ENCODE measurements at regions of chr12 and their contacts with region 1.

Region 1: DNA sequence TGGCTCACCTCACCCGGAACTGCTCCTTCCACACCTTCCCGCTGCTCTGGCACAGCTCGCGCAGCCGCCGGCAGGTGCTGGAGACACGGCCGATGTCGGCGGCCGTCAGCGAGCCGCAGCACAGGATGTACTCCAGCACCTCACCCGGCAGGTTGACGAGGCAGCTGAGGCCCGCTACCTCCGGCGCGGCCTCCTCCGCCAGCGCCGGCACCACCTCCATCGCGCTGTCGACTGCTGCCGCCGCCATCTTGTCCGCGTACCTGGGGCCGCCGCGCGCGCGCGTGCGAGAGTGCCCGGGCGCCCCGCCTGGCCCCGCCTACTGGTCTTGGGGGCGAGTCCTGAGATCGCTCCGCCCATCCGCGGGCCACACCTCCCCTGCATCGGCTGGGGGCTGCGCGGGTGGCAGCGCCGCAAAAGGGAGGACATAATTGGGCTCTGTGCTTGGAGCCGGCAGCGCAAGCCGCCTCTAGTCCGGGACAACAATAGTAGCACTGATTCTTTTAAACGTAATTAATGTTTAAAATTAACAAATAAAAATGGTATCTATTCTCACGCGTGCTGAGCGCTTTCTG is at the start of gene FBXO21:
- DNase-seq: peak; percentile 99
- H3K4me3 ChIP-seq: peak within 1 kb of the TSS; percentile 70 to 78
- H3K27ac ChIP-seq: peak within 1 kb of the TSS in 1 of 2 experiments; percentile 61; a peak in 1 of 4 replicates
- H3K4me1 ChIP-seq: peaks cover 4 to 10% of the 10 kb centered on the region in 2 experiments; a peak in 3 of 4 replicates
- H3K27me3 ChIP-seq: no peaks in the 10 kb centered on the region
- CTCF ChIP-seq: no peak
- EP300 ChIP-seq: no peak
- RAD21 ChIP-seq: no peak
- polyA plus RNA-seq, gene FBXO21: 44.2 and 51.1 TPM in 2 replicates

Region 2: GRCh38 chr12:117084405-117085317 is 105.6 kb before region 1 on chr12:
- CTCF ChIA-PET with region 1: no interaction called
- POLR2A ChIA-PET with region 1: no interaction called
- DNase-seq: no peak
- H3K4me3 ChIP-seq: no peak overlapping the region
- H3K27ac ChIP-seq: no peak overlapping the region
- H3K4me1 ChIP-seq: peaks cover 0 to 5% of the 10 kb centered on the region in 2 experiments; a peak in 1 of 4 replicates
- H3K27me3 ChIP-seq: no peaks in the 10 kb centered on the region; the same call in 1 of the 2 replicates
- CTCF ChIP-seq: no peak
- EP300 ChIP-seq: no peak
- RAD21 ChIP-seq: no peak

Region 3: GRCh38 chr12:117699575-117699974 is 509.3 kb after region 1 on chr12:
- CTCF ChIA-PET with region 1: no interaction called
- POLR2A ChIA-PET with region 1: no interaction called
- DNase-seq: no peak
- H3K4me3 ChIP-seq: no peak overlapping the region
- H3K27ac ChIP-seq: no peak overlapping the region
- H3K4me1 ChIP-seq: no peaks in the 10 kb centered on the region; a peak in 1 of 4 replicates
- H3K27me3 ChIP-seq: no peaks in the 10 kb centered on the region
- CTCF ChIP-seq: no peak
- EP300 ChIP-seq: no peak
- RAD21 ChIP-seq: no peak

Region 4: GRCh38 chr12:117760990-117761389 is 570.7 kb after region 1 on chr12:
- CTCF ChIA-PET with region 1: no interaction called
- POLR2A ChIA-PET with region 1: no interaction called
- DNase-seq: no peak
- H3K4me3 ChIP-seq: no peak overlapping the region
- H3K27ac ChIP-seq: no peak overlapping the region
- H3K4me1 ChIP-seq: no peaks in the 10 kb centered on the region
- H3K27me3 ChIP-seq: no peaks in the 10 kb centered on the region
- CTCF ChIP-seq: no peak
- EP300 ChIP-seq: no peak
- RAD21 ChIP-seq: no peak

Region 5: DNA sequence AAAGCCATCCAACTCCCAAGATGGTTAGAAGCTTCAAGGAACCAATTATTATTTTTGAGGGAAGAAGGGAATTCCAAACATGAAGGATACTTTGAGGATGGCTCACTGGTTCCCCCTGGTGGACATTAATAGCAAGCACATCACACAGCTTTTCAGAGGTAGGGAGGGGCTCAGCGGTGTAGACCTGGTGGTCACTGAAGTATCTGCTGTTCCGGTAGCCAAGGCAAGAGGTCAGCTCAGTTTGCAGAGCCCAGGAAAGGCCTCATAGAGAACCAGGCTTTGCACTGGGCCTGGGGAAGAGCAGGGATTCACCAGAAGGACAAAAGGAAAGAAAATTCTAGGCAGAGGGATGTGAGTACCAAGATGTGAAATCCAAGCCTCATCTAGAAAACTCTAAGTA is 659.8 kb after region 1 on chr12:
- CTCF ChIA-PET with region 1: interaction called, 10 read pairs
- POLR2A ChIA-PET with region 1: no interaction called
- DNase-seq: peak; percentile 81
- H3K4me3 ChIP-seq: no peak overlapping the region; a peak in 1 of 4 replicates
- H3K27ac ChIP-seq: no peak overlapping the region
- H3K4me1 ChIP-seq: no peaks in the 10 kb centered on the region
- H3K27me3 ChIP-seq: no peaks in the 10 kb centered on the region
- CTCF ChIP-seq: peak; percentile 81
- EP300 ChIP-seq: no peak
- RAD21 ChIP-seq: peak; percentile 79